Activated naive CD4-positive, alpha-beta T cell treated with anti-CD3 and anti-CD28 coated beads, Interleukin-2, amount 10 ng/mL, durations not matched to agents 7 days and 5 days (primary cell): ENCODE measurements at regions of chr1 and their contacts with region 1.

Region 1: DNA sequence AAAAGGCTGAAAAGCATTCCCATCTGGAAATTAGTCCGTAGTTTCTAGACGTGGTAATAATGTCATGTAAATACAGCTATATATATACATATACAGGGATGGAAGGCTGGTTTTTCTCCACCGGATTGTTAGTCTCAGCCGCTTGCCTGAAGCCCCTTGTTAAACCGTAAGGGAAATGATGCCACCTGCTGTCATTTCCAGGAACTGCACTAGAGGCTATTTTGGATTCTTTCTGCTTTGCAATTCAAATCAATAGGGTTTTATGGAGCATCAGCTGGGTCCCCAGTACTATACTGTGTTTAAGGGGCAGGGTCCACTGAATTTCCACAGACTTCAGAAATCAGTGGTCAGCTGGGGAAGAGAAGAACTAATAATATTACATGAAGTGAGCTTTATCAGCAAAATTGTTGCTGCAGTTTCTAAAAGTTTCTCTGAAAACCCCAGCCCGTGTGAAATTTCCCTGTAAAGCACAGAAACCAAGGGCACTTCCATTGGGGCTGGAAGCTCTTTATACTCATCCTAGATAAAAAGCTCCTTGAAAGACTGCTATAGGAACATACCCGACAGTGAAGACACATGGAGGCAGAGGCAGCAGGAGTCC is 33.8 kb upstream of the MPZL1 start:
- DNase-seq: peak; percentile 86
- H3K4me3 Mint-ChIP-seq: no peak overlapping the region
- H3K27ac Mint-ChIP-seq: peak overlapping the region; percentile 1
- H3K4me1 Mint-ChIP-seq: peaks cover 7% of the 10 kb centered on the region
- H3K27me3 Mint-ChIP-seq: no peaks in the 10 kb centered on the region

Region 2: DNA sequence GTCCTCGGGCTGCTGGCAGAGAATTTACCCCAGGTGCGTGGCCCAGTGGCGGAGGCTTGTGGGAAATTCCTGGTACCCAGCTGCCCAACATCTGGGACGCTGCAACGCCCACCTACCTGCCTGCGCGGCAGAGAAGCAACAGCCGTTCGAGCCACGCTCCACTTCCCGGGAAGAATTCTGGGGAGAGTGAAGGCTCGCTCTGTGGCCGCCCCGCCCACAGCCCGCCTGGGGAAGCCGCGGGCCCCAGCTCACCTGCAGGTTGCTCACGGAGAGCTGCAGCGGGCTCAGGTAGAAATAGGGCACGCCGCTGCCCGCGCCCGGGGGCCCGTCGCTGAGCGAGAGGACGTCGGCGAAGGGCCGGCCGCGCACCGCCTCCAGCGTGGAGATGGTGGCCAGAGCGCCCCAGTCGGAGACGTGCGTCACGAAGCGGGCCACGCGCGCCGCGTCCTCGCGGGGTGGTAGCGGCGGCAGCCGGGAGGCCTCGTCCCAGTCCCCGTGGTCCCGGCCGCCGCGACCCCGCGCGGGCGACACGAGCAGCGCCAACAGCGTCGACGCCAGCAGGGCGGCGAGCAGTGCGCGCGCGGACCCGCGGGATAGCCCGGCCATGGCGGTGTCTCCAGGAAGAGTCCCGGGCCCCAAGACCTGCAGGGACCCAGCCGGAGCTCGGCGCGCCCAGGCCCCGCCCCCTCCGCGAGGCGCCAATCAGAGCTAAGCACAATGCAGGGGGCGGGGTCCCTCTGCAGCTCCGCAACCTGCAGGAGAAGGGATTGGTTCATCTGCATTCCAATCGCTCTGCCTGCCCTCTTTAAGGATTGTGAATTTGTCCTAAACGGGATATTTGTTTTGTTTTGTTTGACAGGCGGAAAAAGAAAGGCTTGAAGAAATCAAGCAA is 134.6 kb before region 1 on chr1 and contains the start of gene CREG1:
- CTCF ChIA-PET with region 1: interaction called, 11 read pairs
- DNase-seq: peak; percentile 96
- H3K4me3 Mint-ChIP-seq: peak within 1 kb of the TSS; percentile 84
- H3K27ac Mint-ChIP-seq: peak within 1 kb of the TSS; percentile 83
- H3K4me1 Mint-ChIP-seq: peaks cover 26% of the 10 kb centered on the region
- H3K27me3 Mint-ChIP-seq: peaks cover 14% of the 10 kb centered on the region

Region 3: GRCh38 chr1:167599957-167600581 is 88.0 kb before region 1 on chr1:
- CTCF ChIA-PET with region 1: interaction called, 100 read pairs
- DNase-seq: peak; percentile 61
- H3K4me3 Mint-ChIP-seq: peak overlapping the region; percentile 14
- H3K27ac Mint-ChIP-seq: peak overlapping the region; percentile 78
- H3K4me1 Mint-ChIP-seq: peaks cover 47% of the 10 kb centered on the region
- H3K27me3 Mint-ChIP-seq: peaks cover 10% of the 10 kb centered on the region

Region 4: GRCh38 chr1:167635156-167635648 is 52.8 kb before region 1 on chr1:
- CTCF ChIA-PET with region 1: interaction called, 27 read pairs
- DNase-seq: no peak
- H3K4me3 Mint-ChIP-seq: no peak overlapping the region
- H3K27ac Mint-ChIP-seq: peak overlapping the region; percentile 87
- H3K4me1 Mint-ChIP-seq: peaks cover 73% of the 10 kb centered on the region
- H3K27me3 Mint-ChIP-seq: no peaks in the 10 kb centered on the region

Region 5: GRCh38 chr1:167676205-167676915 is 11.7 kb before region 1 on chr1:
- CTCF ChIA-PET with region 1: interaction called, 15 read pairs
- DNase-seq: no peak
- H3K4me3 Mint-ChIP-seq: no peak overlapping the region
- H3K27ac Mint-ChIP-seq: peak overlapping the region; percentile 65
- H3K4me1 Mint-ChIP-seq: peaks cover 39% of the 10 kb centered on the region
- H3K27me3 Mint-ChIP-seq: no peaks in the 10 kb centered on the region

Region 6: GRCh38 chr1:167797015-167797414 is 109.0 kb after region 1 on chr1:
- CTCF ChIA-PET with region 1: no interaction called
- DNase-seq: no peak
- H3K4me3 Mint-ChIP-seq: no peak overlapping the region
- H3K27ac Mint-ChIP-seq: no peak overlapping the region
- H3K4me1 Mint-ChIP-seq: peaks cover 5% of the 10 kb centered on the region
- H3K27me3 Mint-ChIP-seq: no peaks in the 10 kb centered on the region